ENCODE measurements at regions of chr15 and their contacts with region 1.

Region 1: GRCh38 chr15:78437762-78438302 is at the start of gene IREB2:
- DNase-seq: peak; percentile 97 to 100
- ATAC-seq: peak; percentile 91 to 96 (median 92)
- H3K4me3 ChIP-seq: peak within 1 kb of the TSS; percentile 95
- H3K4me3 Mint-ChIP-seq: peak within 1 kb of the TSS; percentile 79
- H3K27ac ChIP-seq: peak within 1 kb of the TSS; percentile 95
- H3K27ac Mint-ChIP-seq: peak within 1 kb of the TSS; percentile 83 to 85
- H3K4me1 ChIP-seq: peaks cover 17% of the 10 kb centered on the region
- H3K4me1 Mint-ChIP-seq: peaks cover 29 to 44% of the 10 kb centered on the region in 2 donors
- H3K27me3 ChIP-seq: no peaks in the 10 kb centered on the region
- H3K27me3 Mint-ChIP-seq: peaks cover 4 to 12% of the 10 kb centered on the region in 2 donors
- CTCF ChIP-seq: no peak
- total RNA-seq, gene IREB2: 84.9 to 121 (median 99.0) TPM

Region 2: GRCh38 chr15:78457101-78457500 is 19.3 kb after region 1 on chr15:
- intact Hi-C with region 1: loop called (anchors 2 kb)
- DNase-seq: no peak
- ATAC-seq: no peak
- H3K4me3 ChIP-seq: no peak overlapping the region
- H3K4me3 Mint-ChIP-seq: peak overlapping the region; percentile 3
- H3K27ac ChIP-seq: no peak overlapping the region
- H3K27ac Mint-ChIP-seq: peak overlapping the region; percentile 72 to 74
- H3K4me1 ChIP-seq: peaks cover 18% of the 10 kb centered on the region
- H3K4me1 Mint-ChIP-seq: peaks cover 86 to 91% of the 10 kb centered on the region in 2 donors
- H3K27me3 ChIP-seq: no peaks in the 10 kb centered on the region
- H3K27me3 Mint-ChIP-seq: no peaks in the 10 kb centered on the region
- CTCF ChIP-seq: no peak